Prostate gland (tissue), 2 donors: ENCODE measurements at regions of chr16 and their contacts with region 1.

Region 1: GRCh38 chr16:3305109-3306068 is at the starts of genes TIGD7 and ZNF75A:
- DNase-seq: peak; percentile 82
- H3K4me3 ChIP-seq: peak within 1 kb of the TSS; percentile 73 to 78
- H3K27ac ChIP-seq: peak within 1 kb of the TSS; percentile 91 to 93
- H3K4me1 ChIP-seq: no peaks in the 10 kb centered on the region
- H3K27me3 ChIP-seq: no peaks in the 10 kb centered on the region
- CTCF ChIP-seq: peak in 3 of 4 experiments; percentile 12 to 44 (median 38)
- POLR2A ChIP-seq: peak; percentile 57
- total RNA-seq, gene TIGD7: 4.4 to 15.5 TPM
- total RNA-seq, gene ZNF75A: 34.9 to 41.5 TPM

Region 2: DNA sequence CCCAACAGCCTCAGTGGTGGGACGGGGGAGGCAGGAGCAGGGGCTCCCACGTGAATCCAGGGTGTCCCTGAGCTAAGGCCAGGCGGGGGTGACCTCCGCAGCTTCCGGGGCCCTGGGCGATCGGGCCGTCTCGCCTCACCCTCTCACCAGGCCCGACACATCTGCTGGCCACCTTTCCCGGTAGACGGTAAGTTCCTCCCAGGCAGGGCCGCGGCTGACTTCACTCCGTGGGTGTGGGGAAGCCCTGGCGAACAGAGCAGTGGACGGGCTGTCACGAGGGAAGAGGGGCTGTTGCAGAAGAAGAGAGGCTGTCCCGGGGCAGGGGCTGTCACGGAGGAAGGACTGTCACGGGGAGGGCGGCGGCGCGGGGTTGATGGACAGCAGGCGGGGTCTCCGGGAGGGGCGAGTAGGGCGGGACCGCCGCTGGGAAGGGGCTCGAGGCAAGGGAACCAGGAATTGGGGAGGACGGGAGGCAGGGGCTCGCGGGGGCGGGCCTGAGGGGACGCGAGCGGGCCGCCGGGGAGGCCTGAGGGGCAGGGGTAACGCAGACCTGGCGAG is 325.6 kb before region 1 on chr16:
- intact Hi-C with region 1: no loop called
- DNase-seq: no peak
- H3K4me3 ChIP-seq: peak overlapping the region; percentile 59 to 69
- H3K27ac ChIP-seq: no peak overlapping the region
- H3K4me1 ChIP-seq: peaks cover 11% of the 10 kb centered on the region
- H3K27me3 ChIP-seq: no peaks in the 10 kb centered on the region
- CTCF ChIP-seq: no peak
- POLR2A ChIP-seq: no peak

Region 3: GRCh38 chr16:3223913-3224515 is 81.4 kb before region 1 on chr16:
- intact Hi-C with region 1: no loop called
- DNase-seq: no peak
- H3K4me3 ChIP-seq: no peak overlapping the region
- H3K27ac ChIP-seq: no peak overlapping the region
- H3K4me1 ChIP-seq: no peaks in the 10 kb centered on the region
- H3K27me3 ChIP-seq: no peaks in the 10 kb centered on the region
- CTCF ChIP-seq: no peak
- POLR2A ChIP-seq: no peak

Region 4: DNA sequence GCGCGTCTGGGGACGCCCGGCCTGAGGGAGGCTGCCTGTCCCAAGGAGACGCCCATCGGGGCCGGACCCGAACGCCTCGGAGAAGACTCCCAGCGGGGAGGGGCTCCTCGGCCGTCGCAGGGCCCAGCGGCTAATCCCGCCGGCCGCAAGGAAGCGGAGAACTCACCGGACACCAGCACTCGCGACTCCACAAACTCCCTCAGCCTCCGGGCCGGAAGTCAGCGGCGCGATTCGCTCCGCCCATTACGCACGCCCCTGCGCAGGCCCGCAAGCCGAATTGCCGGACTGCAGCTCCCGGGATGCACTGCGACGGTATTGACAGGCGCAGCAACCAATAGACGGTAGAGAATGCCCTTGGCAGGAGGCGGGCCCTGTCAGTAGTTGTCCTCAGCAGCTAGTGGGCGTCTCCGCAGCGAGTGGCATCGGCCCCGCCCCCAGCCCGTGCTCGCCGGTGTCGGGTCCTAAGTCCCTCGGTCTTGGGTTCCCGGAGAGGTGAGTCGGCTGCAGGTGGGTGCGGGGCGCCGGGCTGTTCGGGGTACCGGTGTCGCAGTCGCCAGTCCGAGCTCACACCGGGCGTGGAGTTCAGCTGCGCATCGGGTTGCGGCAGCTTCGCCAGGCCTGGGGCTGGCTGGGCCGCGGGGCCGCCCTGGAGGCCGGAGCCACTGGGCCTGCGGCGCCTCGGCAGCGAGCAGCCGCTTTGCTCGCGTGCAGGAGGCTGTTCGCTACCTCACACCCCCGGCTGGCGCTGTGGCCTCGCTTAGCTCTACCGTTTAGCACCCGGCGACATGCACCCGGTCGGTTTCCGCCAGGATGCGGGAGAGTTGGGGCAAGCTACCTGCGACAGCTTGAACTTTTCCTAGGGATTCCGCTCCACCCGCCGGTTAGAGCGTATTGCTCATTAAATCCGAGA is 95.6 kb after region 1 on chr16 and contains the starts of genes ZNF174 and ZSCAN32:
- intact Hi-C with region 1: loop called (anchors 10 kb)
- DNase-seq: peak; percentile 99
- H3K4me3 ChIP-seq: peak within 1 kb of the TSS; percentile 57 to 65
- H3K27ac ChIP-seq: peak within 1 kb of the TSS; percentile 68 to 70
- H3K4me1 ChIP-seq: no peaks in the 10 kb centered on the region
- H3K27me3 ChIP-seq: no peaks in the 10 kb centered on the region
- CTCF ChIP-seq: peak in 2 of 4 experiments; percentile 23 to 36
- POLR2A ChIP-seq: peak; percentile 67
- total RNA-seq, gene ZNF174: 11.2 to 19.8 TPM
- total RNA-seq, gene ZSCAN32: 15.2 to 17.4 TPM

Region 5: DNA sequence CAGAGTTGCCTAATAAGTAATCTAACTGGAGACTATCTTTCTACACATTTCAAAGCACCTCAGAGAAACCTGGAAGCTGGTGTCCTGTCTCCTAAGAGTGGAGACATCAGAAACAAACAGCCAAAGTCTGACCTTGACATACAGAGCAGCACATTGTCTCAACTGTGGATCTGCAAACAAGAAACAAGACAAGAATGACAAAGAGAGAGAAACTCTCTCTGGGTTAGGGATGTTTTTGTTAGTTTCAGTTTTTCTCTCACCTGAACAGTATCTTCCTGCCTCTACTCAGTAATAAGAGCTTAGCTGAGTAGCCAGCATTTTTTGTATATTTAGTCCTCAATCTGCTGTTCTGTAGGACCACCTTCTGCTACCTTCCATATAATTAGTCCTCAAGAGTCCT is 129.0 kb after region 1 on chr16:
- intact Hi-C with region 1: no loop called
- DNase-seq: no peak
- H3K4me3 ChIP-seq: no peak overlapping the region
- H3K27ac ChIP-seq: no peak overlapping the region
- H3K4me1 ChIP-seq: no peaks in the 10 kb centered on the region
- H3K27me3 ChIP-seq: no peaks in the 10 kb centered on the region
- CTCF ChIP-seq: no peak
- POLR2A ChIP-seq: no peak